Activated CD8-positive, alpha-beta memory T cell treated with anti-CD3 and anti-CD28 coated beads, Interleukin-2, amount 10 ng/mL, durations not matched to agents 7 days and 5 days (primary cell): ENCODE measurements at regions of chr2 and their contacts with region 1.

Region 1: DNA sequence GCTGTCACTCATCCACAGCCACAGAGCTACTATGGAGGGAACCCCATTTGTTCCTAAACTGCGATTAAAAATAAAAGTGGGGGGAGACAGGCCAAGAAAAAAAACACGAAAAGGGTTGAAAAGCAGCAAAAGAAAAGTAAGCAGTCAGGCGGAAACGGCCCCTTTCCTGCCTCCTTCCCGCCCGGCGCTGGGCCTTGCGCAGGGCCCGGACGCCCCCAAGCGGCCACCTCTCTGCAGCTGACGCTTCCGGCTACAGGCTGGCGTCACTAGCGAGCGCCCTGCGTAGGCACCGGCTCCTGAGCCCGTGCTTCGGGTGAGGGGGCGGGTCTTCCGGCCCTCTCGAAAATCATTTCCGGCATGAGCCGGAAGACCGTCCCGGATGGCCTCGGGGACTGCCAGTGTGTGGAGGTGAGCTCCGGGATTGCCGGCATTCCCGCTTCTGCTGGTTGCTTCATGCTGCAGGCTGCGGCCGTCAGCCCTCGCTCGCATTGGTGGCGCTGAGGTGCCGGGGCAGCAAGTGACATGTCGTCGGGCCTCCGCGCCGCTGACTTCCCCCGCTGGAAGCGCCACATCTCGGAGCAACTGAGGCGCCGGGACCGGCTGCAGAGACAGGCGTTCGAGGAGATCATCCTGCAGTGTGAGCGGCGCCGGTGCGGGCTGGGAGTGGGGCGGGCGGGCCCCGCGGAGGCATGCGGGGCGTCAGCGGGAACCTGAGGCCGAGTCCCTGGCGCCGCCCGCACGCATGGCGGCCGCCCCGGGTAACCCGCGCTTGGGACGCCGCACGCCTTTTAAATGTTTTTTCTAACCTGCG is at the start of gene ATG16L1:
- DNase-seq: peak; percentile 98
- ATAC-seq: peak; percentile 97
- H3K4me3 Mint-ChIP-seq: peak within 1 kb of the TSS; percentile 92
- H3K27ac Mint-ChIP-seq: peak within 1 kb of the TSS; percentile 98
- H3K4me1 Mint-ChIP-seq: peaks cover 71% of the 10 kb centered on the region
- H3K27me3 Mint-ChIP-seq: no peaks in the 10 kb centered on the region
- total RNA-seq, gene ATG16L1: 62.8 to 63.8 TPM

Region 2: DNA sequence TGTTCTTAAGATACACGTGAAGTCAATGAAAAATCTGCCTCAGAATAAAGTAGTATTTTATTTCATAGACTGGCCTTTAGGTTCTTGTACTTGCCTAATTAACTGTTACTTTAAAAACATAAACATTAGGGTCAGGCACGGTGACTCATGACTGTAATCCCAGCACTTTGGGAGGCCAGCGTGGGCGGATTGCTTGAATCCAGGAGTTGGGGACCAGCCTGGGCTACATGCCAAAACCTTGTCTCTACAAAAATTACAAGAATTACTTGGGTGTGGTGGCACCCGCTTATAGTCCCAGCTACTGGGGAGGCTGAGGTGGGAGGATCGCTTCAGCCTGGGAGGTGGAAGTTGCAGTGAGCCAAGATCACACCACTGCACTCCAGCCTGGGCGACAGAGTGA is 397.4 kb before region 1 on chr2:
- CTCF ChIA-PET with region 1: interaction called, 21 read pairs
- DNase-seq: no peak
- ATAC-seq: no peak
- H3K4me3 Mint-ChIP-seq: no peak overlapping the region
- H3K27ac Mint-ChIP-seq: no peak overlapping the region
- H3K4me1 Mint-ChIP-seq: peaks cover 2% of the 10 kb centered on the region
- H3K27me3 Mint-ChIP-seq: no peaks in the 10 kb centered on the region

Region 3: DNA sequence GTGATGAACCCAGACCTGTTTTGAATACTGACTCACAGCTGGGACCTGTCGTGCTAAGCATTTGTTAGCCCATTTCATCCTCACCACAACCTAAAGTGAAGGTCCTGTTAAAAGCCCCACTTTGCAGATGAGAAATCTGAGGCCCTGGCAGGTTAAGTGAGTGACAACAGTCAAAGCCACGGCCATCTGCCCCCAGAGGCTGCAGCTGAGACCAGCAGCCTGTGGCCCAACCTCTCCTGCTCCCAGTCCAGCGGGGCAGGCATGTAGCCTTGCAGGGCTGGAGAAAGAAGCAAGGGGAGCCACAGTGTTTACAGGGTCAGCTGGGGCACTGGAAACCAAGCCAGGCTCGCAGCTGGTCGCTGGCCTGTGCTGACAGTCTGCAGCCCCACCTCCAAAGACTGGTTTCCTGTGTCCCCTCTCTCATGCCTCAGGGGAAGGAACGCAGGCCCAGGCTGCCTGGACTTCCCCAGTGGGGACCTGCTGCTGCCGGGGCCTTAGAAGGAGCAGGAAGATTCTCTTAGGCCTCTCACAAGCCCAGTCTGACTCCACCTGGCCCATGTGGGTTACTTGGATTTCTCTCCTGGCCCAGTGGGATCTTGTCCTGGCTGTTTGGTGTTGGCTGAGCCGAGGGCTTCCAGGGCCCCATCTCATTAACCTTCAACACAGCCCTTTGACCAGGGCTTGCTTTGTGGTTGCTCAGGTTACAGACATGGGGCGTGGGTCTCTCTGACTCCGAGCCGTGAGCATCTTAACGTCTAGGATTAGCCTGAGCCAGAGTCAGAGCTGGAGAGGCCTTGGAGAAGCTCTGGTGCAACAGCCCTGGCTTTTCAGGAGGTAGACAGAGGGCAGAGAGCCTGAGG is 189.7 kb before region 1 on chr2:
- CTCF ChIA-PET with region 1: interaction called, 34 read pairs
- DNase-seq: peak; percentile 71
- ATAC-seq: peak; percentile 29
- H3K4me3 Mint-ChIP-seq: peak overlapping the region; percentile 98
- H3K27ac Mint-ChIP-seq: peak overlapping the region; percentile 97
- H3K4me1 Mint-ChIP-seq: peaks cover 50% of the 10 kb centered on the region
- H3K27me3 Mint-ChIP-seq: no peaks in the 10 kb centered on the region

Region 4: GRCh38 chr2:233084488-233084887 is 167.0 kb before region 1 on chr2:
- CTCF ChIA-PET with region 1: interaction called, 13 read pairs
- DNase-seq: peak; percentile 90
- ATAC-seq: peak; percentile 45
- H3K4me3 Mint-ChIP-seq: peak overlapping the region; percentile 74
- H3K27ac Mint-ChIP-seq: peak overlapping the region; percentile 94
- H3K4me1 Mint-ChIP-seq: peaks cover 82% of the 10 kb centered on the region
- H3K27me3 Mint-ChIP-seq: no peaks in the 10 kb centered on the region

Region 5: DNA sequence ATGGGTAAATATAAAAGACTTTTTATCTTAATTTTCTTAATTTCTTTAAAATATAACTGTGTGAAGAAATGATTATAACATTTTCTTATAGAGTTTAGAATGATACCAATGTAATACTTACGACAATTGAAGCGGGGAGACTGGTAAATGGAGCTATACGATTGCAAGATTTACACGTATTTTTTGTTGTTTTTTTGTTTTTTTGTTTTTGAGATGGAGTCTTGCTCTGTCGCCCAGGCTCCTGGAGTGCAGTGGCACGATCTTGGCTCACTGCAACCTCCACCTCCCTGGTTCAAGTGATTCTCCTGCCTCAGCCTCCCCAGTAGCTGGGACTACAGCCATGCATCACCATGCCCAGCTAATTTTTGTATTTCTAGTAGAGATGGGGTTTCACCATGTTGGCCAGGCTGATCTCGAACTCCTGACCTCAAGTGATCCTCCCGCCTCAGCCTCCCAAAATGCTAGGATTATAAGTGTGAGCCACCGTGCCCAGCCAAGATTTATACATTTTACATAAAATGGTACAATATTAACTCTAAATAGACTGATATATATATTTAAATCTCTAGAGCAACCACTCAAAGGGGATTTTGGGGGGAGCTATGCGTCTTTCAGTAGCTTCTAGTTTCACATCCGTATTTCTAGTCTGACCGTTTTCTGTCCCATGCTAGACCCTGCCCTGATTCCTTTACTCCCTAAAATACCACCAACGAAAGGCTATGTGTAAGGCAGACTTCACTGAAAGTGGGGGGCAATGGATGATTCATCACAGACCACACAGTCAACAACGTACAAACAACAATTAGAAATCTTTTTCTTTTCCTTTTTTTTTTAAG is 28.2 kb before region 1 on chr2:
- CTCF ChIA-PET with region 1: interaction called, 11 read pairs
- DNase-seq: no peak
- ATAC-seq: no peak
- H3K4me3 Mint-ChIP-seq: no peak overlapping the region
- H3K27ac Mint-ChIP-seq: no peak overlapping the region
- H3K4me1 Mint-ChIP-seq: peaks cover 14% of the 10 kb centered on the region
- H3K27me3 Mint-ChIP-seq: peaks cover 2% of the 10 kb centered on the region

Region 6: DNA sequence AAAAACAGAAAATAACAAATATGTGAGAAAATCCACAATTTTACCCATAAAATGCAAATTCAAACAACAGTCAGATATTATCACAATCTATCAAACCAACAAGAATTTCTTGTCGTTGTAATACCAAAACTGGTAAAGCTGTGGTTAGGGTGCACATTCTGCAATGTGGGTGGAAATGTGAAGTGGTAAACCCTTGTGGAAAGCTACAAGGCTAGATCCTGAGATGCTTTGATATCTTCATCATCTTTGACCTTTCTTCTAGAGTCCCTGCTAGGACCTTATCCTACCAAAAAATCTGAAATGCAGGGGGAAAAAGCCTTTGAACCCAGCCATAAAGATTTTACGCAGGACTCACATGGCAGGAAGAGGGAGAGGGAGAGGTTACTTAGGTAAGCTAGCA is 17.2 kb before region 1 on chr2:
- CTCF ChIA-PET with region 1: interaction called, 47 read pairs
- DNase-seq: peak; percentile 74
- ATAC-seq: peak; percentile 34
- H3K4me3 Mint-ChIP-seq: peak overlapping the region; percentile 41
- H3K27ac Mint-ChIP-seq: peak overlapping the region; percentile 89
- H3K4me1 Mint-ChIP-seq: peaks cover 78% of the 10 kb centered on the region
- H3K27me3 Mint-ChIP-seq: no peaks in the 10 kb centered on the region

Region 7: DNA sequence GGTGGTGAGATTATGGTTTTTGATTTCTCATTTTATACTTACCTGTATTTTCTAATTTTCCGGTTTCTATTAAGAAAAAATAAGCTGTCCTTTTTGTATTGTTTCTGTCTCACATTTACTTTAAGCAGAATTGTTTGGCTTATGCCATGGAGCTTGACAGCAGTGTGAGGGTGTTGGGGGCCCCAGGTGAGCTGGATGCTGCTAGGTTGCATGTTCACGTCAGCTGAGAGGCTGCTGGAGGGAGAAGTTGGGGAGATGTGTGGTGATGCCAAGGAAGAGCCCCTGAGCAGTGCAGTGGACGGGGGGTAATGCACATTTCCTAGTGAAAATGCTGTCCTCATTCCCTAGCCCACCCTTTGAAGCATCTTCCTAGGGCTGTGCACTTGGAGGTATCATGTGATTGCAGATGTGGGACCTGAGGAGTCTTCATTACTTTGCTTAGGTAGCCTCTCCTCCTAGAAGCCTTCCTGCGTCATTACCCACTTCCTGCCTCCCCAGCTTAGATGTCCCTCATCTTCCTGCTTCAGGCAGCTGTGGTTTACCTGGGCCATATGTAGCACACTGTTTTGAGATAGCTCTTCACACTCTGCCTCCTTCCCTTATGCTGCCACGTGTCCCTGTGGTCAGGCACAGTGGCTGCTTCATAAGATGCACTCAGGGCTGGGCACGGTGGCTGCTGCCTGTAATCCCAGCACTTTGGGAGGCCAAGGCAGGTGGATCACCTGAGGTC is 16.2 kb after region 1 on chr2:
- CTCF ChIA-PET with region 1: interaction called, 93 read pairs
- DNase-seq: peak; percentile 96
- ATAC-seq: peak; percentile 94
- H3K4me3 Mint-ChIP-seq: peak overlapping the region; percentile 70
- H3K27ac Mint-ChIP-seq: peak overlapping the region; percentile 98
- H3K4me1 Mint-ChIP-seq: peaks cover 71% of the 10 kb centered on the region
- H3K27me3 Mint-ChIP-seq: no peaks in the 10 kb centered on the region

Region 8: DNA sequence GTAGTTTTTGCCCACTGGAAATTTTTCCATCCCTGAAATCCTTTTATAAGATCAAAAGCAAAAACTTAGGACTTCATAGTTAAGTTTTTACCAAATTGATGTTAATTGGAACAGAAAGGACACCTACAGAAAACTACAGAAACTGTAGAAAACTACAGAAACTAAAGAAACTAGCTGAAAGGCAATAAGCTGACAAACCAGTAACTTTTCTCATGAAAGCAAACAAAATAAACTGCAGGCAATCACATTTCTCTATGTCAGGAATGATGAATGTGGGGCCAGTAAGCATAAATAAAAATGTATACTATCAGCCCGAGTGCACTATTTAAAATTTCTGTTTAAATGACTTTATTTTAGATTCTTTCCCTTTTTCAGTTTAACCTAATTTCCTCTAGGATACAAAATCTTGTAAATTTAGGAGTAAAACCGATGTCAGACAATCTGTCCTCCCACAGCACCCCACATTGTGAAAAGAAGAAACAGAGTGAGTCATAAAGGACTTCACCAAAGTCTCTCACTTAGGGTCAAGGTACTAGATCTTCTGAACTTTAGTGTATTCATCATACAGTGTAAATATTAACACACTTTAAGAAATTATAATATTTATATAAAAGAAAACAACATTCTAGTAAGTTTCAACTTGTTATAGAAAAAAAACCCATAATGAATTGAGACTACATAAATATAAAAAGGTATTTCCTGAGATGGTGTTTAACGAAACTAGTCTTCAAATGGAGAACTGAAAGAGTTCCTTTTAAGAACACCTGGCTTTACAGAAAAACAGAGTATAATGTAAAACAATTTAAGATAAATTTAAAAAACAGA is 268.5 kb after region 1 on chr2:
- CTCF ChIA-PET with region 1: no interaction called
- DNase-seq: no peak
- ATAC-seq: no peak
- H3K4me3 Mint-ChIP-seq: no peak overlapping the region
- H3K27ac Mint-ChIP-seq: no peak overlapping the region
- H3K4me1 Mint-ChIP-seq: peaks cover 3% of the 10 kb centered on the region
- H3K27me3 Mint-ChIP-seq: no peaks in the 10 kb centered on the region